GM12878 (cell line): ENCODE measurements at regions of chr3 and their contacts with region 1.

Region 1: DNA sequence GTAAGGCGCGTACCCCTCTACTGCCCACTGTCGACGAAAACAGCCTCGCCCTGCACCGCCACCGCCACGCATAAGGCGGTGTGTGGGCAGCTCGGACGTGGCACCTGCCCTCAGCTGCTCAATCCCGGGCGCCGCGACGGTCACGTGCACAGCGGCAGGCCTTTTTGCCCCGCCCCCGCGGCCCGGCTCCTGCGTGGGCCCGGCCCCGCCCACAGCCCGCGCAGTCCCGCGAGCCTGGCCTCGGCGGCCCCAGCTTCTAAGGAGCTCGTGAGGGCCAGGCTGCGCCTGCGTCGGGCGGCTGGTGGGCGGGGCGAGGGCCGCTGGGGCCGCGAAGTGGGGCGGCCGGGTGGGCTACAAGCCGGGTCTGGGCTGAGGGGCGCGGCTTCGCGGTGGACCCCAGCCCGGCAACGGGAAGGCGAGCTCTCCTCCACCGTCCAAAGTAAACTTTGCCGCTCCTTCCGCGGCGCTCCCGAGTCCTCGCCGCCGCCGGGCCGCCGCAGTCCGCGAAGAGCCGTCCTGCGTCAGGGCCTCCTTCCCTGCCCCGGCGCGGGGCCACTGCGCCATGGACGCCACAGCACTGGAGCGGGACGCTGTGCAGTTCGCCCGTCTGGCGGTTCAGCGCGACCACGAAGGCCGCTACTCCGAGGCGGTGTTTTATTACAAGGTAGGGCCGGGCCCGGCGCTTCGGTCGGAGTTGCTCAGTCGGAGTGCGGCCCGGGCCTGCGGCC is at the start of gene CAPN7:
- DNase-seq: peak; percentile 67
- ATAC-seq: peak; percentile 94
- H3K4me3 ChIP-seq: peak within 1 kb of the TSS; percentile 94
- H3K27ac ChIP-seq: peak within 1 kb of the TSS; percentile 61
- H3K4me1 ChIP-seq: no peaks in the 10 kb centered on the region
- H3K27me3 ChIP-seq: no peaks in the 10 kb centered on the region
- CTCF ChIP-seq: peak; percentile 39 to 40 (median 39); a peak in 4 of 6 replicates
- EP300 ChIP-seq: no peak
- POLR2A ChIP-seq: peak; percentile 95
- RAD21 ChIP-seq: no peak
- polyA plus RNA-seq, gene CAPN7: 5.3 to 6.7 TPM

Region 2: GRCh38 chr3:15108082-15108545 is 98.0 kb before region 1 on chr3:
- CTCF ChIA-PET with region 1: interaction called, 68 read pairs
- POLR2A ChIA-PET with region 1: interaction called, 3 read pairs
- RAD21 ChIA-PET with region 1: interaction called, 31 read pairs
- SMC1A ChIA-PET with region 1: interaction called, 14 read pairs
- in situ Hi-C with region 1: no loop called
- intact Hi-C with region 1: loop called (anchors 2 kb)
- DNase-seq: no peak
- ATAC-seq: peak; percentile 99
- H3K4me3 ChIP-seq: no peak overlapping the region
- H3K27ac ChIP-seq: no peak overlapping the region
- H3K4me1 ChIP-seq: no peaks in the 10 kb centered on the region
- H3K27me3 ChIP-seq: no peaks in the 10 kb centered on the region
- CTCF ChIP-seq: peak; percentile 94 to 98 (median 94)
- EP300 ChIP-seq: no peak
- POLR2A ChIP-seq: no peak
- RAD21 ChIP-seq: peak; percentile 82

Region 3: GRCh38 chr3:15180042-15180611 is 26.0 kb before region 1 on chr3:
- CTCF ChIA-PET with region 1: interaction called, 26 read pairs
- POLR2A ChIA-PET with region 1: interaction called, 3 read pairs
- RAD21 ChIA-PET with region 1: interaction called, 11 read pairs
- SMC1A ChIA-PET with region 1: interaction called, 30 read pairs
- in situ Hi-C with region 1: no loop called
- intact Hi-C with region 1: no loop called
- DNase-seq: peak; percentile 40
- ATAC-seq: peak; percentile 92
- H3K4me3 ChIP-seq: peak overlapping the region; percentile 34; the same call in 1 of the 2 replicates
- H3K27ac ChIP-seq: peak overlapping the region; percentile 35
- H3K4me1 ChIP-seq: peaks cover 8% of the 10 kb centered on the region; the same call in 1 of the 2 replicates
- H3K27me3 ChIP-seq: no peaks in the 10 kb centered on the region
- CTCF ChIP-seq: no peak
- EP300 ChIP-seq: peak; percentile 17 to 18; a peak in 1 of 4 replicates
- POLR2A ChIP-seq: no peak
- RAD21 ChIP-seq: no peak

Region 4: DNA sequence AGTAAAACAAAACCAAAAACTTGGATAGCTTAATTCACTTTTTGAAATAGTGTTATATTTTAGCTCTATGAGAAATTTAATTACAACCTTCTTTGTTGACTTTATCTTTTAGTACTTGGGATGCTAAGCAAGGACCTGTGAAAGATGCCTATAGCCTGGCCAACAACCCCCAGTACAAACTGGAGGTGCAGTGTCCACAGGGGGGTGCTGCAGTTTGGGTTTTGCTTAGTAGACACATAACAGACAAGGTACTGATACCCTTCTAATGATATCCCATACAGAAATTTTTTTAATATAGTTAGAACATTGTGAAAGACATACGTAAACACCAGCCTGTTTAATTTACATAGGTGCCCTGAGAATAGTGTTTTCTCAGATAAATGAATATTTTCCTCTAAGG is 35.2 kb after region 1 on chr3:
- CTCF ChIA-PET with region 1: interaction called, 10 read pairs
- POLR2A ChIA-PET with region 1: interaction called, 3 read pairs
- RAD21 ChIA-PET with region 1: interaction called, 5 read pairs
- SMC1A ChIA-PET with region 1: interaction called, 9 read pairs
- in situ Hi-C with region 1: no loop called
- intact Hi-C with region 1: no loop called
- DNase-seq: no peak
- ATAC-seq: peak; percentile 88
- H3K4me3 ChIP-seq: no peak overlapping the region
- H3K27ac ChIP-seq: no peak overlapping the region
- H3K4me1 ChIP-seq: no peaks in the 10 kb centered on the region
- H3K27me3 ChIP-seq: no peaks in the 10 kb centered on the region
- CTCF ChIP-seq: peak; percentile 36 to 54 (median 47); a peak in 5 of 6 replicates
- EP300 ChIP-seq: no peak
- POLR2A ChIP-seq: no peak
- RAD21 ChIP-seq: peak; percentile 55

Region 5: GRCh38 chr3:15291589-15292541 is 85.8 kb after region 1 on chr3:
- CTCF ChIA-PET with region 1: no interaction called
- POLR2A ChIA-PET with region 1: no interaction called
- RAD21 ChIA-PET with region 1: no interaction called
- SMC1A ChIA-PET with region 1: no interaction called
- in situ Hi-C with region 1: no loop called
- intact Hi-C with region 1: no loop called
- DNase-seq: peak; percentile 89
- ATAC-seq: peak; percentile 95
- H3K4me3 ChIP-seq: peak overlapping the region; percentile 17; the same call in 1 of the 2 replicates
- H3K27ac ChIP-seq: peak overlapping the region; percentile 73
- H3K4me1 ChIP-seq: peaks cover 38% of the 10 kb centered on the region
- H3K27me3 ChIP-seq: no peaks in the 10 kb centered on the region
- CTCF ChIP-seq: no peak
- EP300 ChIP-seq: peak; percentile 61 to 64; a peak in 3 of 4 replicates
- POLR2A ChIP-seq: no peak
- RAD21 ChIP-seq: no peak

Region 6: GRCh38 chr3:15399970-15400369 is 193.9 kb after region 1 on chr3:
- CTCF ChIA-PET with region 1: interaction called, 108 read pairs
- POLR2A ChIA-PET with region 1: interaction called, 5 read pairs
- RAD21 ChIA-PET with region 1: interaction called, 48 read pairs
- SMC1A ChIA-PET with region 1: interaction called, 135 read pairs
- in situ Hi-C with region 1: loop called (anchors 5 kb)
- intact Hi-C with region 1: loop called (anchors 1 kb)
- DNase-seq: no peak
- ATAC-seq: no peak
- H3K4me3 ChIP-seq: no peak overlapping the region
- H3K27ac ChIP-seq: no peak overlapping the region
- H3K4me1 ChIP-seq: peaks cover 10% of the 10 kb centered on the region
- H3K27me3 ChIP-seq: no peaks in the 10 kb centered on the region
- CTCF ChIP-seq: no peak
- EP300 ChIP-seq: no peak
- POLR2A ChIP-seq: no peak
- RAD21 ChIP-seq: no peak

Region 7: DNA sequence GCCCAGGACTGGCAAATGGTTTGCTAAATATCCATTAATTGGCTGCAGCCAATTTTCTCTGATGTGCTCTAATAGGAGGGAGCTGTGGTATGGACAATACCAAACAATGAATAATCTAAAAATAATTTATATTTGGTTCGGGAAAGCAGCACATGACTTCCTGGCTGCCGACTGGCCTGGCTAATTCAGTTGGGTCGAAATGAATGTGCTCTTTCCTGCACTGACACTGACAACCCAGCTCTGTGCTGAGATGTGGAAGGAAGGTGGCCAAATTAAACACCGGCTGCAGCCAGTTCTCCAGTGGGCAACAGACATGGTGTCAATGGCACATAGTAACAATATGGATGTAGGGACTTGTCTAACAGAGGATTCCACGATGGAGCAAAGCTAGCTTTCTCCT is 336.5 kb after region 1 on chr3:
- CTCF ChIA-PET with region 1: no interaction called
- POLR2A ChIA-PET with region 1: no interaction called
- RAD21 ChIA-PET with region 1: no interaction called
- SMC1A ChIA-PET with region 1: no interaction called
- in situ Hi-C with region 1: no loop called
- intact Hi-C with region 1: no loop called
- DNase-seq: no peak
- ATAC-seq: no peak
- H3K4me3 ChIP-seq: no peak overlapping the region
- H3K27ac ChIP-seq: no peak overlapping the region
- H3K4me1 ChIP-seq: no peaks in the 10 kb centered on the region
- H3K27me3 ChIP-seq: no peaks in the 10 kb centered on the region
- CTCF ChIP-seq: no peak
- EP300 ChIP-seq: no peak
- POLR2A ChIP-seq: no peak
- RAD21 ChIP-seq: no peak

Region 8: GRCh38 chr3:15805756-15806266 is 599.7 kb after region 1 on chr3:
- CTCF ChIA-PET with region 1: interaction called, 3 read pairs
- POLR2A ChIA-PET with region 1: no interaction called
- RAD21 ChIA-PET with region 1: interaction called, 6 read pairs
- SMC1A ChIA-PET with region 1: no interaction called
- in situ Hi-C with region 1: loop called (anchors 10 kb)
- intact Hi-C with region 1: loop called (anchors 5 kb)
- DNase-seq: peak; percentile 89
- ATAC-seq: peak; percentile 71
- H3K4me3 ChIP-seq: peak overlapping the region; percentile 49
- H3K27ac ChIP-seq: peak overlapping the region; percentile 84
- H3K4me1 ChIP-seq: peaks cover 75% of the 10 kb centered on the region
- H3K27me3 ChIP-seq: no peaks in the 10 kb centered on the region
- CTCF ChIP-seq: no peak; a peak in 1 of 6 replicates
- EP300 ChIP-seq: peak; percentile 96 to 99
- POLR2A ChIP-seq: no peak
- RAD21 ChIP-seq: no peak

Region 9: GRCh38 chr3:15923640-15924405 is 717.7 kb after region 1 on chr3:
- CTCF ChIA-PET with region 1: no interaction called
- POLR2A ChIA-PET with region 1: no interaction called
- RAD21 ChIA-PET with region 1: no interaction called
- SMC1A ChIA-PET with region 1: no interaction called
- in situ Hi-C with region 1: no loop called
- intact Hi-C with region 1: no loop called
- DNase-seq: no peak
- ATAC-seq: peak; percentile 42; the same call in 1 of the 3 replicates
- H3K4me3 ChIP-seq: no peak overlapping the region
- H3K27ac ChIP-seq: no peak overlapping the region
- H3K4me1 ChIP-seq: no peaks in the 10 kb centered on the region
- H3K27me3 ChIP-seq: no peaks in the 10 kb centered on the region; a peak in 1 of 4 replicates
- CTCF ChIP-seq: no peak
- EP300 ChIP-seq: no peak
- POLR2A ChIP-seq: no peak
- RAD21 ChIP-seq: no peak